BJ (cell line): ENCODE measurements at regions of chr4 and their contacts with region 1.

Region 1: GRCh38 chr4:1266881-1267763 is 18.2 kb upstream of the CTBP1 start:
- DNase-seq: no peak
- H3K4me3 ChIP-seq: no peak overlapping the region
- H3K27me3 ChIP-seq: no peaks in the 10 kb centered on the region
- CTCF ChIP-seq: no peak

Region 2: GRCh38 chr4:1122505-1122904 is 144.6 kb before region 1 on chr4:
- CTCF ChIA-PET with region 1: interaction called, 14 read pairs
- POLR2A ChIA-PET with region 1: no interaction called
- DNase-seq: no peak
- H3K4me3 ChIP-seq: no peak overlapping the region
- H3K27me3 ChIP-seq: 0 out of 2 replicates have a peak, but pooled peaks cover 2% of the 10 kb centered on the region
- CTCF ChIP-seq: no peak

Region 3: GRCh38 chr4:1137063-1137776 is 129.9 kb before region 1 on chr4:
- CTCF ChIA-PET with region 1: interaction called, 120 read pairs
- POLR2A ChIA-PET with region 1: no interaction called
- DNase-seq: no peak
- H3K4me3 ChIP-seq: no peak overlapping the region
- H3K27me3 ChIP-seq: peaks cover 6% of the 10 kb centered on the region
- CTCF ChIP-seq: no peak

Region 4: GRCh38 chr4:1249148-1249730 is 17.9 kb before region 1 on chr4:
- CTCF ChIA-PET with region 1: interaction called, 23 read pairs
- POLR2A ChIA-PET with region 1: no interaction called
- DNase-seq: no peak
- H3K4me3 ChIP-seq: peak overlapping the region; percentile 57
- H3K27me3 ChIP-seq: no peaks in the 10 kb centered on the region
- CTCF ChIP-seq: no peak

Region 5: DNA sequence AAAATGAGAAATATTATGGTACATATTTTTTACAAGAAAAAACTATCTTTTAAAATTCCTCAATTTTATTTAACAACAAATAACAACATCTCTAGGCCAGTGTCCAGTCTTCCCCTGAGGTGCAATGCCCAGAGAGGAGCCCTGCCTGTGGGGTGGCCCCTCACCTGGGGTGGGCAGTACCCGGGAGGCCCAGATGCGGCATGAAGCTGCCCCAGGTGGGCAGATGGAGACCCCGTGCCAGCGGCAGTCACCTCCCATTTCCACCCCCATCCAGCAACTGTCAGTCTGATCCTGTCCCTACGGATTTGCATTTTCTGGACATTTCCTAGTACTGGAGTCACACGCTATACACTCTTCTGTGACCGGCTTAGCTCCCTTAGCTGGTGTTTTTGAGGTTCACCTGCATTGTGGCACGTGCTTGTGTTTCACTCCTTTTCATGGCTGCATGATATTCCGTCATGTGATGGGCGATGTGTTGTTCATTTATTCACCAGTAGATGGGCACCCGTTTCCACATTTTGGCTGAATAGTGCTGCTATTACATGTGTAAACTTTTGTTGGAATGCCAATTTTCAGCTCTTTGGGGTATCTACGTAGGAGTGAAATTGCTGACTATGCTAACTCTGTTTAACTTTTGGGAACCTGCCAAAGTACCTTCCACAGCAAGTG is 10.7 kb after region 1 on chr4:
- CTCF ChIA-PET with region 1: interaction called, 21 read pairs
- POLR2A ChIA-PET with region 1: no interaction called
- DNase-seq: no peak
- H3K4me3 ChIP-seq: no peak overlapping the region
- H3K27me3 ChIP-seq: peaks cover 2% of the 10 kb centered on the region; the same call in 1 of the 2 replicates
- CTCF ChIP-seq: no peak

Region 6: GRCh38 chr4:1365271-1366178 is 98.4 kb after region 1 on chr4:
- CTCF ChIA-PET with region 1: no interaction called
- POLR2A ChIA-PET with region 1: no interaction called
- DNase-seq: no peak
- H3K4me3 ChIP-seq: no peak overlapping the region
- H3K27me3 ChIP-seq: no peaks in the 10 kb centered on the region
- CTCF ChIP-seq: no peak

Region 7: GRCh38 chr4:1471443-1472147 is 204.5 kb after region 1 on chr4:
- CTCF ChIA-PET with region 1: no interaction called
- POLR2A ChIA-PET with region 1: no interaction called
- DNase-seq: no peak
- H3K4me3 ChIP-seq: no peak overlapping the region
- H3K27me3 ChIP-seq: peaks cover 3% of the 10 kb centered on the region; the same call in 1 of the 2 replicates
- CTCF ChIP-seq: no peak